Gastrocnemius medialis (tissue), 4 donors: ENCODE measurements at regions of chr6 and their contacts with region 1.

Region 1: DNA sequence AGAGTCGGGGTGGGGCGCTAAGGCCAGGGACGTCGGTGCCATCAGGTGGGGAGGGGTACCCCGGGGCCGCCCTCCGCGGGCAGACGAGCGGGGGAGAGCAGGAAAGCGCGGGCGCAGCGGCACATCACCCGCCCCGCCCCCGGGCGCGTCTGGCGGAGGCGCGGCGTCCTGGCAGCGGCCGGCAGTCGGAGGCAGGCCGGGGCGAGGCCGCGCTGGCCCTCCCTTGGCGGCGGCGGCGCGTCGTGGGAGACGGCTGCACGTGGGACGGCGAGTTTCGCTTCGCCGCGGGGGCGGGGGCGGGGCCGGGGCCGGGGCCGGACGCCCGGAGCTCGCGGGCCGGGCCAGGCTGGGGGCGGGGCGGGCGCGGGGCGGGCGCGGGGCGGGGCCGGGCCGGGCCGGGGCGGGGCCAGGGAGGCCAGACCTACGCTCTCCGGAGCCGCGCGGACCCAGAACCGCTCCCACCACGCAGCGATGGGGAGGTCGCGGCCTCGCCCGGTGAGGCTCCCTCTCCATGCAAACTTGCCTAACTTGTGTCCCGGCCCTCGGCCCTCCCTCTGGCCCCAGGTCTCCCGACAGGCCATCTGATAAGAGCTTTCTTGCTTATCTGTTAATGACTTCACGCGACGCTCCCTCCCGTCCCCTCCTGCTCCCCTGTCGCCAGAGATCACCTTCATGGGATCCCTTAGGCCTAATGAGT is 12.5 kb downstream of the ITPR3 start:
- DNase-seq: peak; percentile 27 to 61
- ATAC-seq: peak; percentile 79 to 87
- H3K4me3 ChIP-seq: peak overlapping the region; percentile 51 to 78 (median 54)
- H3K27ac ChIP-seq: peak overlapping the region; percentile 12 to 59 (median 41)
- H3K4me1 ChIP-seq: peaks cover 13 to 20% of the 10 kb centered on the region in 2 donors
- H3K27me3 ChIP-seq: no peaks in the 10 kb centered on the region
- CTCF ChIP-seq: no peak
- POLR2A ChIP-seq: peak in 1 of 2 donors; percentile 9

Region 2: DNA sequence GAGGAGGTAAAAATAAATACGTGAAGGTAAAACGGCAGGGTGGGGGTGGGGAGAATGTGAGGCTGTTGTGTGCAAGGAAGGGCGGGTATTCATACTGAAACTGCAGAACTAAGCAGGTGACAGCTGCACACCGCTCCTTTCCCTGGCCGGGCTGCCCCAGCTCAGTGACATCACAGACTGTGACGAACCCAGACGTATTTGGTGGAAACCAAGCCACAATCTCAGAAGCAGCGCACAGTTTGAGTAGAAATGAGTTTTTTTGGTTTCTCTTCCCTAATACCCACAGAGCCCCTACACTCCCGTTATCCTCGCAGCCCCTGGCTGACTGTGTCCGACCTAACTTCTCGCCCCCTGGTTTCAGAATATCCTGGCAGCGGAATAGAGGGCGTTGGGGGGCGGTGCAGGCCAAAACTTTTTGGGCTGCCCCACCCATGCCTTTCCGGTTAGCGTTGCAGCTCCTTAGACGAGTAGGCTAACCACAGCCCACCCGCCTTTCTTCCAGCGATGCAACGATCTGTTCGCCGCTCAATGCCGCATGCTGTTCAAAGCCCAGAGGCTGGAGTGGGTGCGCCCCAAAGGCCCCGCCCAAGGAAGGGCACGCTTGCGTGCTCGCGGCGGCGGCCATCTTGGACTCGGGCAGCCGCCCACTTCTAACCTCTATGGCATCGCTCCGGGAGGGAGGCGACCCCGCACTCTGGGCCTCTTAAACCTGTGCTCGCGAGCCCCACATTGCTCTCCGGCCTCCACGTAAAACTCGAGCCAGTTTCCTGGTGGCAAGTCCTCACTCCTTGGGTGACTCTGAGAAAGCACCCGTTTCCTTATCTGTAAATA is 62.6 kb before region 1 on chr6:
- in situ Hi-C with region 1: no loop called
- intact Hi-C with region 1: no loop called
- DNase-seq: peak; percentile 73 to 80
- ATAC-seq: peak; percentile 92
- H3K4me3 ChIP-seq: peak overlapping the region; percentile 81 to 95 (median 94)
- H3K27ac ChIP-seq: peak overlapping the region; percentile 88 to 98 (median 92)
- H3K4me1 ChIP-seq: peaks cover 10 to 12% of the 10 kb centered on the region in 2 donors
- H3K27me3 ChIP-seq: no peaks in the 10 kb centered on the region
- CTCF ChIP-seq: no peak
- POLR2A ChIP-seq: peak in 1 of 2 donors; percentile 37

Region 3: GRCh38 chr6:33683051-33683571 is 49.5 kb after region 1 on chr6:
- in situ Hi-C with region 1: no loop called
- intact Hi-C with region 1: no loop called
- DNase-seq: no peak
- ATAC-seq: no peak
- H3K4me3 ChIP-seq: no peak overlapping the region
- H3K27ac ChIP-seq: no peak overlapping the region
- H3K4me1 ChIP-seq: no peaks in the 10 kb centered on the region
- H3K27me3 ChIP-seq: no peaks in the 10 kb centered on the region
- CTCF ChIP-seq: no peak
- POLR2A ChIP-seq: no peak

Region 4: GRCh38 chr6:33700391-33701050 is 66.9 kb after region 1 on chr6:
- in situ Hi-C with region 1: no loop called
- intact Hi-C with region 1: loop called (anchors 5 kb)
- DNase-seq: peak; percentile 58 to 61
- ATAC-seq: peak; percentile 81
- H3K4me3 ChIP-seq: no peak overlapping the region
- H3K27ac ChIP-seq: peak overlapping the region in 3 of 4 donors; percentile 12 to 54 (median 35)
- H3K4me1 ChIP-seq: peaks cover 21 to 40% of the 10 kb centered on the region in 2 donors
- H3K27me3 ChIP-seq: no peaks in the 10 kb centered on the region
- CTCF ChIP-seq: peak; percentile 23 to 77 (median 69)
- POLR2A ChIP-seq: no peak

Region 5: GRCh38 chr6:33788694-33789549 is 155.3 kb after region 1 on chr6 and contains the start of gene LEMD2:
- in situ Hi-C with region 1: no loop called
- intact Hi-C with region 1: loop called (anchors 5 kb)
- DNase-seq: peak; percentile 89 to 93
- ATAC-seq: peak; percentile 89 to 93
- H3K4me3 ChIP-seq: peak within 1 kb of the TSS; percentile 66 to 90 (median 68)
- H3K27ac ChIP-seq: peak within 1 kb of the TSS; percentile 94 to 97 (median 94)
- H3K4me1 ChIP-seq: peaks cover 31 to 36% of the 10 kb centered on the region in 2 donors
- H3K27me3 ChIP-seq: peaks cover 6 to 8% (median 8%) of the 10 kb centered on the region in 3 donors
- CTCF ChIP-seq: peak in 1 of 5 experiments; percentile 13
- POLR2A ChIP-seq: peak; percentile 92 to 96
- total RNA-seq, gene LEMD2: 34.1 to 39.1 (median 38.1) TPM